Common myeloid progenitor, CD34-positive (primary cell): ENCODE measurements at regions of chr11 and their contacts with region 1.

Region 1: DNA sequence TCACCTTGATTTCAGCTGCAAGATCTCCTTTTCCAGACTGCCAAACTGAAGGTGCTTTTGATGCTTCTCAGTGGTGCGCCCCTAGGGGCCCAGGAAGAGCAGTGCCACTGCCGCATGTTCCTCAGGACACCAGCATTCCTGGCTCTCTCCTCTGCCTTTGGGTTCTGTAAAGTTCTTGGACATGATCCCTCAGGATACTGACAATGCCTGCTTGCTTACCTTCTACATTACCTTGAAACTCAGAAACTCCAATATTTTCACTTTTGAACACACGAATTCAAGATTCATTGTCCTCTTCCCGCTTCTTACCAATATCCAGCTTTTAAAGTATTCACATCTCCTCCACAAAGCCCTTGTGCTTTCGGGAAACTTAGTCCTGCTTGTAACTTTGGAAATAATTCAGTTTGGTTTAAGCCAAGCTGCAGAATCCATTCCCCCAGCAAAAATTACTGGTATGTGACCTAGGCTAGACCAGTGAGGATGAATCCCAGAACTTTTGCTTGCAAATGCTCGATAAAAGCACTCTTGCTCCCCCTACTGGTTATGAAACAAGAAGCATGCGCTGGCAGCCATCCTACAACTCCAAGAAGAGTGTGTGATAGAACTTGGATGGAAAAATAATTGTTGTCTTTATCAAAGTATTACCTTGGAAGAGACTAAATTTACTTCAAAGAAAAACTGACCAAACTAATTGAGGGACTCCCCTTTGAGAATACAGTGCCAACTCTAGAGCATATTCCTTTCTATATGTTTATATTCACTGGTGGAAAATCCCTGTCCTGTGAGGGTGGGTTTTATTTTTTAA is 16.5 kb upstream of the OR5B21 start:
- DNase-seq: peak; percentile 85 to 86 (median 85)
- H3K4me3 ChIP-seq: peak overlapping the region in 6 of 7 experiments; percentile 27 to 68 (median 48)
- H3K27ac ChIP-seq: peak overlapping the region; percentile 74 to 85
- H3K4me1 ChIP-seq: peaks cover 12 to 40% (median 29%) of the 10 kb centered on the region in 4 experiments
- H3K27me3 ChIP-seq: no peaks in the 10 kb centered on the region

Region 2: DNA sequence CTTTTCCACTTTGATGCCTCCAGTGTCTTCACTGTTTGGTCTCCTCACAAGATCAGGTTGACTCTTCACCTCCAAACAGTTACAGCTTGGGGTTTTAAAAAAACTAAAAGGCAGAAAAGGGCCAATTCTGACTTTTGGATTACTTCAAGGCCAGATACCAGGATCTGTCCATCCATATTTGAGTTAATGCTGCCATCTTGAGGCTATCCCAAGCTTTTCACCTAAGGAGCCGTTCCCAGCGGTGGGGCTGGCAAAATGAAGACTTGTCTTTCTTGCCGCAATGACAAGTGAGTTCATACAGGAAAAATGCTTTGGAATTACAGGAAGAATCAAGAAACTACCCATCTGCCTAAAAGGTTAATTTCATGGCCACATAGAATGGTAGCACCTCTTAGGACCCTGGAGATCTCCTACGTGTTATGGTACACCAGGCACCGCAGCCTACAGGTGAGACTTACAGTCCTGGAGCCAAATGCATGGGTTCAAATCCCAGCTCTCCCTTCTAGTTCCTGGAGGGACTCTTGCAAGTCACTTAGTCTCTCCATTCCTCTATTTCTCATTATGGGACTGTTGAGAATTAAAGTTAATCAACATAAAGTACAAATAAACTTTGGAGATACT is 10.6 kb before region 1 on chr11:
- CTCF ChIA-PET with region 1: interaction called, 16 read pairs
- POLR2A ChIA-PET with region 1: no interaction called
- DNase-seq: peak; percentile 57 to 71 (median 61)
- H3K4me3 ChIP-seq: no peak overlapping the region
- H3K27ac ChIP-seq: no peak overlapping the region
- H3K4me1 ChIP-seq: no peaks in the 10 kb centered on the region
- H3K27me3 ChIP-seq: no peaks in the 10 kb centered on the region

Region 3: DNA sequence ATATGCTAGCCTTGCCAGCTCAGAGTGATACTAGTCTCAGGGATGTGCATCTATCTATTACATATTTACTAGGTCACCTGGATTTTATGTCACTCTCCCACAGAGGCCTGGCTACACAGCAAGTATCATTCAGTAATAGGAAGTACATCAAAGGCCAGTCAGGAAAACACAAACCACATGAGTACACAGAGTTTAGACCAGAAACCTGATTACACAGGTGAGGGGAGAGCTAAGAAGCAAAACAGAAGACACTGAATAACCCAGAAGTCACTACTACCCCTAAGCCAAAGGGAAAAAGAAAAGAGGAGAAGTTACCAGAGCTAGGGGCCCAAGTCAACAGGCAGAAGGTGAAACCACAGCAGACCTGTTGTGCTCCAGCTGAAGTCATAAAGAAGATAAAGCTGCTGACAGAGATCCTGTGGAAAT is 38.0 kb after region 1 on chr11:
- CTCF ChIA-PET with region 1: interaction called, 47 read pairs
- POLR2A ChIA-PET with region 1: interaction called, 3 read pairs
- DNase-seq: peak in 2 of 3 donors; percentile 62 to 70
- H3K4me3 ChIP-seq: no peak overlapping the region
- H3K27ac ChIP-seq: no peak overlapping the region
- H3K4me1 ChIP-seq: peaks cover 7 to 33% (median 28%) of the 10 kb centered on the region in 4 experiments
- H3K27me3 ChIP-seq: no peaks in the 10 kb centered on the region

Region 4: DNA sequence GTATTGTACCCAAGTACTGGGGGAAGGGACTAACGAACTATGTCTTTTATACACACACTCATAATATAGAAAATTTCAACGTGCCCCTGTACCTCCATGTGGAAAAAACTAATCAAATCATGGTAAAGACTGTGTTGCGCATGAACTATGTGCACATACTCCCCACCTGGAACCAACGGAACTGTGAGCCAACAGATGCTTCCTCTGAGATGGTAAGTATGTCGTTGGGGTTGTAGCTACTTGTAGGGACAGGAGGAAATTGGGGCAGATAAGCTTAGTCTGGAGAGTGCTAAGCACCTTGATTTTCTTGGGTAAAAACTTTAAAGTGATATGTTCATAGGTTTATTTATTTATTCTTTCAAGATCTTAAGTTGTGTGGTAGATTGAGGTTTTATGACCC is 167.2 kb after region 1 on chr11:
- CTCF ChIA-PET with region 1: no interaction called
- POLR2A ChIA-PET with region 1: no interaction called
- DNase-seq: peak; percentile 86 to 99 (median 97)
- H3K4me3 ChIP-seq: peak overlapping the region in 2 of 7 experiments; percentile 48 to 51
- H3K27ac ChIP-seq: peak overlapping the region; percentile 63 to 64
- H3K4me1 ChIP-seq: peaks cover 11 to 44% (median 23%) of the 10 kb centered on the region in 4 experiments
- H3K27me3 ChIP-seq: no peaks in the 10 kb centered on the region